B cell (primary cell): ENCODE measurements at regions of chr4 and their contacts with region 1.

Region 1: GRCh38 chr4:70839589-70840093 is at the start of gene GRSF1:
- DNase-seq: peak; percentile 95
- ATAC-seq: peak; percentile 86
- H3K4me3 ChIP-seq: peak within 1 kb of the TSS; percentile 27 to 79 (median 73)
- H3K4me3 Mint-ChIP-seq: peak within 1 kb of the TSS; percentile 99
- H3K27ac ChIP-seq: peak within 1 kb of the TSS; percentile 62 to 85
- H3K27ac Mint-ChIP-seq: peak within 1 kb of the TSS; percentile 95
- H3K4me1 ChIP-seq: peaks cover 22 to 46% of the 10 kb centered on the region in 2 donors
- H3K4me1 Mint-ChIP-seq: peaks cover 45% of the 10 kb centered on the region
- H3K27me3 ChIP-seq: no peaks in the 10 kb centered on the region
- H3K27me3 Mint-ChIP-seq: no peaks in the 10 kb centered on the region
- CTCF ChIP-seq: no peak
- total RNA-seq, gene GRSF1: 43.2 and 44.2 TPM in 2 replicates

Region 2: DNA sequence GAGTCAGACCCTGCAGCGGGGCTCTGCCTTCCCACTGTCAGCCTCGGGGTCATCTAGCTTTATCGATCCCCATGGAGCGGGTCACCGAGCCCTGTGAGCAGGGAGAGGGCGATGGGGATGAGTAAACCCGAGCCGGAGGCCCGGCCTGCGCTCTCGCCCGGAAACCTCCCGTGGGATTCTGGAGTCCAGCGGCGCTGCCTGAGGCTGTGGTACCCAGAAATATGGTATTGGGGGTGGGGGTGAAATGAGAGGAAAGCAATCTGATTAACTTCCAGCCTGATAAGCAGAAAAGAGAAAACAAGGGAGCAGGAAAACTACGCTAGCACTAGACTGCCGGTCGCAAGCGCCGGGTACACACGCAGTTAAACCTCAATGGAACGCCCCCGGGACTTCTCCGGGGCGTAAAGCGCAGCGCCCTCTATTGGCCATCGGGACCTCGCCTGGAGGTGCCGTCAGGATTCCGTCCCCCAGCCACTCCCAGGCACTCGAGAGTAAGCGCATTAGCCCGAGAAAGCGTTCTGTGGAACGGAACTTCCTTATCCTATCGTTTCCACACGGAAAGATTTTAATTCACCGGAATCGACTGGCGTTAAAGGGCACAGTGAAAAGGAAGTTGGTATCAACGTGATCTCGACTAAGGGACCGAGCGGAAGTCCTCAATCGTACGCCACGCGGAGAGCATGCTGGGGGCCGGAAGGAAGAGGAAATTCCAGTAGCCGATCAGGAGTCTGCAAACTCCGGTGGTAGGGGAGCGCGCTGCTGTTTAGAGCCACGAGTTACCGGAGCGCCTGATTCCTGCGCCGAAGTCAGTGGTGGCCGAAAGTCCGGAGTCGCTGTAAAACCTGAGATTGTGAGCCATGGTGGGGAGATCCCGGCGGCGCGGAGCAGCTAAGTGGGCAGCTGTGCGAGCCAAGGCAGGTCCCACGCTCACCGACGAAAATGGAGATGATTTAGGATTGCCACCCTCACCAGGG is 151.5 kb before region 1 on chr4 and contains the start of gene UTP3:
- CTCF ChIA-PET with region 1: interaction called, 3 read pairs
- POLR2A ChIA-PET with region 1: interaction called, 4 read pairs
- intact Hi-C with region 1: loop called (anchors 5 kb)
- DNase-seq: peak; percentile 96
- ATAC-seq: peak; percentile 90
- H3K4me3 ChIP-seq: peak within 1 kb of the TSS; percentile 66 to 97 (median 92)
- H3K4me3 Mint-ChIP-seq: peak within 1 kb of the TSS; percentile 100
- H3K27ac ChIP-seq: peak within 1 kb of the TSS; percentile 96 to 98
- H3K27ac Mint-ChIP-seq: peak within 1 kb of the TSS; percentile 100
- H3K4me1 ChIP-seq: peaks cover 24 to 32% of the 10 kb centered on the region in 2 donors
- H3K4me1 Mint-ChIP-seq: peaks cover 37% of the 10 kb centered on the region
- H3K27me3 ChIP-seq: no peaks in the 10 kb centered on the region
- H3K27me3 Mint-ChIP-seq: no peaks in the 10 kb centered on the region
- CTCF ChIP-seq: peak; percentile 98
- total RNA-seq, gene UTP3: 42.0 and 42.2 TPM in 2 replicates

Region 3: DNA sequence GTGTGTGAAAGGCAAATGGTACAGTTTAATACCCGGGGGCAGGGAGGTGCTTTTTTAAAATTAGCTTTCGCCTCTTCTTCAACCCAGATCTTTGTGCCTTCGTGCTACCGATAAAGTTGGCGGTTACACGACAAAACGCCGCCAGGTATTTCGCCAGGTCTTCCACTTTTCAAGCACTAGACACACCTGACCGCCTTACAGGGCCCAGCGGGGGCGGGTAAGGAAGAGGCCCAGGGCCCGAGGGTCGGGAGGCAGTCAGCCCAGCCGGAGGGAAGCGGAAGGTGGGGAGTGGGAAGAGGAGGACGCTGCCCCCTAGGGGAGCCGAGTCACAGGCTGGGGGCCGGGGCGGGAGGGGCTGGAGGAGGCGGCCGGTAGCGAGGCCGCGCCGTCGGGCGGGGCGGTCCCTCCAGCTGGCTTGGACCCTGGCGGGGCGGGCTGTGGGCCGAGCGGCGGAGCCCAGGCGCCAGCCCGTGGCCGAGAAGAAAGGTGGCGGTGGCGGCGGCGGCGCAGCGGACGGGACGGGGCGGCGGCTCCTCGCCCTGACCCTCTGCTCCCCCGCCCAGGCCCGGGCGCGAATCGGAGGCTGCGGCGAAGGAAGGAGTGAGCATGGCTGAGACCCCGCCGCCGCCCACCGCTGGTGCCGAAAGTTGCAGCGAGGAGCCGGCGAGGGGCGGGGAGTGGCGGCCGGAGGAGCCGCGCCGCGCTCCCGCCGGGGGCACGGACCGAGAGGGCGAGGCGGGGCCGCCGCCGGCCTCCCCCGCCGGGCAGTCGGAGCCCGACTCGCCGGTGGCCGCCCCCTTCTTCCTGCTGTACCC is 135.1 kb before region 1 on chr4:
- CTCF ChIA-PET with region 1: interaction called, 7 read pairs
- POLR2A ChIA-PET with region 1: interaction called, 5 read pairs
- intact Hi-C with region 1: loop called (anchors 1 kb)
- DNase-seq: peak; percentile 85
- ATAC-seq: peak; percentile 70
- H3K4me3 ChIP-seq: peak overlapping the region; percentile 2 to 88 (median 82)
- H3K4me3 Mint-ChIP-seq: peak overlapping the region; percentile 91
- H3K27ac ChIP-seq: peak overlapping the region; percentile 62 to 80
- H3K27ac Mint-ChIP-seq: peak overlapping the region; percentile 98
- H3K4me1 ChIP-seq: peaks cover 17 to 25% of the 10 kb centered on the region in 2 donors
- H3K4me1 Mint-ChIP-seq: peaks cover 25% of the 10 kb centered on the region
- H3K27me3 ChIP-seq: no peaks in the 10 kb centered on the region
- H3K27me3 Mint-ChIP-seq: no peaks in the 10 kb centered on the region
- CTCF ChIP-seq: peak; percentile 12

Region 4: GRCh38 chr4:70874268-70875156 is 34.9 kb after region 1 on chr4:
- CTCF ChIA-PET with region 1: interaction called, 3 read pairs
- POLR2A ChIA-PET with region 1: interaction called, 3 read pairs
- intact Hi-C with region 1: loop called (anchors 2 kb)
- DNase-seq: peak; percentile 60
- ATAC-seq: peak; percentile 82
- H3K4me3 ChIP-seq: peak overlapping the region in 4 of 5 experiments; percentile 17 to 50 (median 36)
- H3K4me3 Mint-ChIP-seq: peak overlapping the region; percentile 85
- H3K27ac ChIP-seq: no peak overlapping the region
- H3K27ac Mint-ChIP-seq: peak overlapping the region; percentile 78
- H3K4me1 ChIP-seq: peaks cover 19 to 20% of the 10 kb centered on the region in 2 donors
- H3K4me1 Mint-ChIP-seq: peaks cover 21% of the 10 kb centered on the region
- H3K27me3 ChIP-seq: no peaks in the 10 kb centered on the region
- H3K27me3 Mint-ChIP-seq: no peaks in the 10 kb centered on the region
- CTCF ChIP-seq: no peak

Region 5: DNA sequence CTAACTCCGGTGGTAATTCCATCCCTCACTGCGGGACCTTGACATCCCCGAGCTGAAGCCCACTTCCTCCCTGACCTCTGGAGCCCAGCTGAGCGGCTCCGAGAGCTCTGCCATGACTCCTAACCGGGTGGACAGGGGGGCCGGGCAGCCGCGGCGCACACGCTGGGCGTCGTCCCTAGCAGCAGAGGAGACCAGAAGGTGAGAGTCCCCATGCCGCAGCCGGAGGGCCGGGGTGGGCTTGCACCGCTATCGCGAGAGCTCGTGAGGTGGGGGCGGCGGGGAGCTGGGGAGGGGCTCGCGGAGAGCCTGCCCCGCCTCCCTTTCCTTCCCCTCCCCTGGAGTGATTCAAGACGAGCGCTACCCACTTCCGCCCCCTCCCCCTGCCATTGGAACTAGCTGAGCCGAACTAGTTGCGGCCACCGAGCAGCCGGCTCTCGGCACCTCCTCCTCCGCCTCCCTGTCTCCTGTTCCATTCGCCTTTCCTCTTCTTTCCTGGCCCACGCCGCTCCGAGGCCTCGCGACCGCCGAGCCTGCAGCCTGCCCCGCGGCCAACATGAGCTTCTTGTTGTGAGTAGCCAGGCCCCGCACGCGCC is 62.4 kb after region 1 on chr4 and contains the start of gene MOB1B:
- CTCF ChIA-PET with region 1: interaction called, 19 read pairs
- POLR2A ChIA-PET with region 1: interaction called, 5 read pairs
- intact Hi-C with region 1: loop called (anchors 1 kb)
- DNase-seq: peak; percentile 85
- ATAC-seq: peak; percentile 95
- H3K4me3 ChIP-seq: peak within 1 kb of the TSS; percentile 72 to 98 (median 77)
- H3K4me3 Mint-ChIP-seq: peak within 1 kb of the TSS; percentile 99
- H3K27ac ChIP-seq: peak within 1 kb of the TSS; percentile 41 to 76
- H3K27ac Mint-ChIP-seq: peak within 1 kb of the TSS; percentile 89
- H3K4me1 ChIP-seq: peaks cover 13% of the 10 kb centered on the region in 2 donors
- H3K4me1 Mint-ChIP-seq: peaks cover 29% of the 10 kb centered on the region
- H3K27me3 ChIP-seq: no peaks in the 10 kb centered on the region
- H3K27me3 Mint-ChIP-seq: no peaks in the 10 kb centered on the region
- CTCF ChIP-seq: peak; percentile 61
- total RNA-seq, gene MOB1B: 30.4 and 32.4 TPM in 2 replicates

Region 6: DNA sequence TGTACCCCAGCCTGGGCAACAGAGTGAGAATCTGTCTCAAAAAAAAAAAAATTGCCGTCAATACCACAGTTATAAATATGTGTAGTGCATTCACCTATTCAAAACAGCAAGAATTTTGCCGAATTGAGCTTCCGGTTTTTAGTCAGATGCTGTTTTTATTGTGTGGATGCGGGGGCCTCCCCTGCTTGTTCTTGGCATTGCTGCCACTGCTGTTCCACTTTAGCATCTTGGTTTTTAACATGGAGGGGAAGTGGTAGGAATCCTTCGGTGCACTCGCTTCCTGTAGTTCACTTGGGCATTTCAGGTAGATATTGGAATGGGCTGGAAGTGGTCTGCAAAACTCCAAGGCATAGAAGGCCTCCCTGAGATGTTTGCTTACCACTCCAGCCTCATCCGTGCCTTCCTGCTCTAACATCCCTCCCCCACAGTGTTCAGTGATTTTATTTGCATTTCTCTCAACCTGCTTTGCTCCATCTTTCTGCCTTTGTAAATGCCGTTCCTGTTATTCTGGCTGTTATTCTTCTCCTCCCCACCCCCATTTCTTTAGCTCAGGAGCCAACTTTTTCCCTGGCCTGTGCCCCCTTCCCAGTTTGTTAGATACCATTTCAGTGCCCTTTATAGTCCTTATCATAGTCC is 88.0 kb after region 1 on chr4:
- CTCF ChIA-PET with region 1: interaction called, 5 read pairs
- POLR2A ChIA-PET with region 1: interaction called, 3 read pairs
- intact Hi-C with region 1: loop called (anchors 2 kb)
- DNase-seq: peak; percentile 72
- ATAC-seq: peak; percentile 61
- H3K4me3 ChIP-seq: peak overlapping the region in 1 of 5 experiments; percentile 13
- H3K4me3 Mint-ChIP-seq: peak overlapping the region; percentile 61
- H3K27ac ChIP-seq: peak overlapping the region; percentile 55 to 67
- H3K27ac Mint-ChIP-seq: peak overlapping the region; percentile 72
- H3K4me1 ChIP-seq: peaks cover 40 to 47% of the 10 kb centered on the region in 2 donors
- H3K4me1 Mint-ChIP-seq: peaks cover 52% of the 10 kb centered on the region
- H3K27me3 ChIP-seq: no peaks in the 10 kb centered on the region
- H3K27me3 Mint-ChIP-seq: no peaks in the 10 kb centered on the region
- CTCF ChIP-seq: peak; percentile 19